ENCODE measurements at regions of chr10 and their contacts with region 1.

Region 1: GRCh38 chr10:17430647-17431355 is 23.6 kb downstream of the ST8SIA6 start:
- DNase-seq: peak; percentile 48 to 87 (median 64)
- ATAC-seq: no peak
- H3K4me3 ChIP-seq: no peak overlapping the region
- H3K4me3 Mint-ChIP-seq: peak overlapping the region; percentile 76
- H3K27ac ChIP-seq: no peak overlapping the region
- H3K27ac Mint-ChIP-seq: peak overlapping the region; percentile 93
- H3K4me1 ChIP-seq: peaks cover 46% of the 10 kb centered on the region
- H3K4me1 Mint-ChIP-seq: peaks cover 52% of the 10 kb centered on the region
- H3K27me3 ChIP-seq: no peaks in the 10 kb centered on the region
- H3K27me3 Mint-ChIP-seq: peaks cover 4% of the 10 kb centered on the region
- CTCF ChIP-seq: peak; percentile 98

Region 2: GRCh38 chr10:16436758-16437539 is 993.9 kb before region 1 on chr10 and contains the start of gene PTER:
- CTCF ChIA-PET with region 1: no interaction called
- POLR2A ChIA-PET with region 1: no interaction called
- intact Hi-C with region 1: loop called in 1 of 2 experiments (anchors 10 kb)
- DNase-seq: peak; percentile 95 to 99 (median 97)
- ATAC-seq: peak; percentile 98
- H3K4me3 ChIP-seq: peak within 1 kb of the TSS; percentile 68
- H3K4me3 Mint-ChIP-seq: peak within 1 kb of the TSS; percentile 91
- H3K27ac ChIP-seq: peak within 1 kb of the TSS; percentile 57 to 81
- H3K27ac Mint-ChIP-seq: peak within 1 kb of the TSS; percentile 80
- H3K4me1 ChIP-seq: peaks cover 47% of the 10 kb centered on the region
- H3K4me1 Mint-ChIP-seq: peaks cover 47% of the 10 kb centered on the region
- H3K27me3 ChIP-seq: no peaks in the 10 kb centered on the region
- H3K27me3 Mint-ChIP-seq: no peaks in the 10 kb centered on the region
- CTCF ChIP-seq: no peak
- total RNA-seq, gene PTER: 8.2 to 9.7 TPM

Region 3: GRCh38 chr10:16828114-16828568 is 602.7 kb before region 1 on chr10:
- CTCF ChIA-PET with region 1: no interaction called
- POLR2A ChIA-PET with region 1: no interaction called
- intact Hi-C with region 1: loop called in 1 of 2 experiments (anchors 2 kb)
- DNase-seq: peak; percentile 30 to 88 (median 51)
- ATAC-seq: peak; percentile 99
- H3K4me3 ChIP-seq: no peak overlapping the region
- H3K4me3 Mint-ChIP-seq: no peak overlapping the region
- H3K27ac ChIP-seq: no peak overlapping the region
- H3K27ac Mint-ChIP-seq: no peak overlapping the region
- H3K4me1 ChIP-seq: peaks cover 8% of the 10 kb centered on the region
- H3K4me1 Mint-ChIP-seq: peaks cover 7% of the 10 kb centered on the region
- H3K27me3 ChIP-seq: no peaks in the 10 kb centered on the region
- H3K27me3 Mint-ChIP-seq: no peaks in the 10 kb centered on the region
- CTCF ChIP-seq: peak; percentile 63

Region 4: GRCh38 chr10:17023386-17024298 is 407.2 kb before region 1 on chr10:
- CTCF ChIA-PET with region 1: no interaction called
- POLR2A ChIA-PET with region 1: no interaction called
- intact Hi-C with region 1: loop called in 1 of 2 experiments (anchors 10 kb)
- DNase-seq: peak; percentile 46 to 95 (median 66)
- ATAC-seq: peak; percentile 74
- H3K4me3 ChIP-seq: no peak overlapping the region
- H3K4me3 Mint-ChIP-seq: peak overlapping the region; percentile 43
- H3K27ac ChIP-seq: peak overlapping the region; percentile 83 to 89
- H3K27ac Mint-ChIP-seq: peak overlapping the region; percentile 83
- H3K4me1 ChIP-seq: peaks cover 46% of the 10 kb centered on the region
- H3K4me1 Mint-ChIP-seq: peaks cover 62% of the 10 kb centered on the region
- H3K27me3 ChIP-seq: no peaks in the 10 kb centered on the region
- H3K27me3 Mint-ChIP-seq: no peaks in the 10 kb centered on the region
- CTCF ChIP-seq: no peak

Region 5: DNA sequence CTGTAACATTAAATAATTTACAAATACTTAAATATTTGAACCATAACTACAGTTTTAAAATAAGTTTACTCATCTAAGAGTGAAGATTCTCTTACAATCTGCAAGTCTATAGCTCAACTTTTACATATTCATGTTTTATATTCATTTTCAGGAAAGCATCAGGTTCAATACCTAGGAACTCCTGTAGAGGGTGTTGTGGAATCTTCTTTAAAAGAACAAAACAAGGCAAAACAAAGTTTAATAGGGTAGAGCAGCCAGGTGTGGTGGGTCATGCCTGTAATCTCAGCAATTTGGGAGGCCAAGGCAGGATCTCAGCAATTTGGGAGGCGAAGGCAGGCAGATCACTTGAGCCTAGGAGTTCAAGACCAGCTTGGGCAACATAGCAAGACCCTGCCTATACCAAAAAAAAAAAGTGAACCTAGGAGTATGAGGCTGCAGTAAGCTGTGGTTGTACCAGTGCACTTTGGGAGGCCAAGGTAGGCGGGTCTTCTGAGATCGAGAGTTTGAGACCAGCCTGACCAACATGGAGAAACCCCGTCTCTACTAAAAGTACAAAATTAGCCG is 21.5 kb before region 1 on chr10:
- CTCF ChIA-PET with region 1: interaction called, 32 read pairs
- POLR2A ChIA-PET with region 1: interaction called, 41 read pairs
- intact Hi-C with region 1: loop called (anchors 1 kb)
- DNase-seq: peak in 4 of 14 experiments; percentile 41 to 65 (median 62)
- ATAC-seq: peak; percentile 92
- H3K4me3 ChIP-seq: no peak overlapping the region
- H3K4me3 Mint-ChIP-seq: no peak overlapping the region
- H3K27ac ChIP-seq: no peak overlapping the region
- H3K27ac Mint-ChIP-seq: peak overlapping the region; percentile 56
- H3K4me1 ChIP-seq: peaks cover 6% of the 10 kb centered on the region
- H3K4me1 Mint-ChIP-seq: peaks cover 29% of the 10 kb centered on the region
- H3K27me3 ChIP-seq: no peaks in the 10 kb centered on the region
- H3K27me3 Mint-ChIP-seq: no peaks in the 10 kb centered on the region
- CTCF ChIP-seq: peak; percentile 74

Region 6: GRCh38 chr10:17454161-17455014 is 23.6 kb after region 1 on chr10 and contains the start of gene ST8SIA6:
- CTCF ChIA-PET with region 1: no interaction called
- POLR2A ChIA-PET with region 1: interaction called, 21 read pairs
- intact Hi-C with region 1: no loop called
- DNase-seq: peak; percentile 13 to 76 (median 48)
- ATAC-seq: peak; percentile 70
- H3K4me3 ChIP-seq: peak within 1 kb of the TSS; percentile 60
- H3K4me3 Mint-ChIP-seq: peak within 1 kb of the TSS; percentile 89
- H3K27ac ChIP-seq: no peak within 1 kb of the TSS
- H3K27ac Mint-ChIP-seq: peak within 1 kb of the TSS; percentile 59
- H3K4me1 ChIP-seq: peaks cover 15% of the 10 kb centered on the region
- H3K4me1 Mint-ChIP-seq: peaks cover 27% of the 10 kb centered on the region
- H3K27me3 ChIP-seq: no peaks in the 10 kb centered on the region
- H3K27me3 Mint-ChIP-seq: peaks cover 40% of the 10 kb centered on the region
- CTCF ChIP-seq: no peak
- total RNA-seq, gene ST8SIA6: 0.19 to 0.34 TPM

Measured in CD4-positive, alpha-beta T cell (primary cell).